ENCODE measurements at regions of chr10 and their contacts with region 1.

Region 1: GRCh38 chr10:31759799-31760626 is 168.6 kb downstream of the ARHGAP12 start:
- DNase-seq: peak; percentile 92
- H3K4me3 Mint-ChIP-seq: peak overlapping the region; percentile 83
- H3K27ac Mint-ChIP-seq: peak overlapping the region; percentile 89
- H3K4me1 Mint-ChIP-seq: peaks cover 28% of the 10 kb centered on the region
- H3K27me3 Mint-ChIP-seq: peaks cover 5% of the 10 kb centered on the region

Region 2: GRCh38 chr10:31603235-31604087 is 156.6 kb before region 1 on chr10:
- intact Hi-C with region 1: loop called (anchors 1 kb)
- DNase-seq: peak; percentile 82
- H3K4me3 Mint-ChIP-seq: peak overlapping the region; percentile 80
- H3K27ac Mint-ChIP-seq: no peak overlapping the region
- H3K4me1 Mint-ChIP-seq: peaks cover 29% of the 10 kb centered on the region
- H3K27me3 Mint-ChIP-seq: peaks cover 6% of the 10 kb centered on the region

Region 3: DNA sequence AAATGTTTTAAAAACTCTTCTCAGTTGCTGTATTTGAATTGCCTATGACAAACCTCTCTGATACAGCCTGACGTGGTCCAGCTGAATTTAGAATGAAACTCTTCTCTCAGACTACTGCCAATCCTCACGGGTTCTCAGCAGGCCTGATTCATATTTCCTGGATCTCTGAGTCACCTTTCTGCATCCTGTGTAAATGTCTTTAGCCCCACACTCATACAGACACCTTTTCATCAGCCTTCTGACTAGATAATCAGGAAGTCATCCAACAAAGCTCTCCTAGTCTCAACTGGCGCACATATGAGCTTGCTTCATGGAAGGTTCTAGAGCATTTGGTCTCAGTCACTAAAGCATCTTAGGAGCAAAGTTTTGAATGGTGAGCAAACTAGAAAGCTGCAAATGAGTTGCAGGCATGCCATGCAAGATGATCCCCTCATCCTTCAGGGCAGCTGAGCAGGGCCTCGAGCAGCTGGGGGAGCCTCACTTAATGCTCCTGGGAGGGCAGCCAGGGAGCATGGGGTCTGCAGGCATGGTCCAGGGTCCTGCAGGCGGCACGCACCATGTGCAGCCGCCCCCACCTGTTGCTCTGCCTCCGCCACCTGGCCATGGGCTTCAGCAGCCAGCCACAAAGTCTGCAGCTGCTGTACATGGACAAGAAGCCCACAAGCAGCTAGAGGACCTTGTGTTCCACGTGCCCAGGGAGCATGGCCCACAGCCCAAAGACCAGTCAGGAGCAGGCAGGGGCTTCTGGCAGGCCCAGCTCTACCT is 14.2 kb before region 1 on chr10:
- intact Hi-C with region 1: loop called (anchors 1 kb)
- DNase-seq: peak; percentile 49
- H3K4me3 Mint-ChIP-seq: peak overlapping the region; percentile 2
- H3K27ac Mint-ChIP-seq: peak overlapping the region; percentile 82
- H3K4me1 Mint-ChIP-seq: peaks cover 27% of the 10 kb centered on the region
- H3K27me3 Mint-ChIP-seq: no peaks in the 10 kb centered on the region

Region 4: GRCh38 chr10:31789557-31789956 is 29.5 kb after region 1 on chr10:
- intact Hi-C with region 1: loop called (anchors 1 kb)
- DNase-seq: no peak
- H3K4me3 Mint-ChIP-seq: no peak overlapping the region
- H3K27ac Mint-ChIP-seq: no peak overlapping the region
- H3K4me1 Mint-ChIP-seq: peaks cover 5% of the 10 kb centered on the region
- H3K27me3 Mint-ChIP-seq: peaks cover 7% of the 10 kb centered on the region

Region 5: DNA sequence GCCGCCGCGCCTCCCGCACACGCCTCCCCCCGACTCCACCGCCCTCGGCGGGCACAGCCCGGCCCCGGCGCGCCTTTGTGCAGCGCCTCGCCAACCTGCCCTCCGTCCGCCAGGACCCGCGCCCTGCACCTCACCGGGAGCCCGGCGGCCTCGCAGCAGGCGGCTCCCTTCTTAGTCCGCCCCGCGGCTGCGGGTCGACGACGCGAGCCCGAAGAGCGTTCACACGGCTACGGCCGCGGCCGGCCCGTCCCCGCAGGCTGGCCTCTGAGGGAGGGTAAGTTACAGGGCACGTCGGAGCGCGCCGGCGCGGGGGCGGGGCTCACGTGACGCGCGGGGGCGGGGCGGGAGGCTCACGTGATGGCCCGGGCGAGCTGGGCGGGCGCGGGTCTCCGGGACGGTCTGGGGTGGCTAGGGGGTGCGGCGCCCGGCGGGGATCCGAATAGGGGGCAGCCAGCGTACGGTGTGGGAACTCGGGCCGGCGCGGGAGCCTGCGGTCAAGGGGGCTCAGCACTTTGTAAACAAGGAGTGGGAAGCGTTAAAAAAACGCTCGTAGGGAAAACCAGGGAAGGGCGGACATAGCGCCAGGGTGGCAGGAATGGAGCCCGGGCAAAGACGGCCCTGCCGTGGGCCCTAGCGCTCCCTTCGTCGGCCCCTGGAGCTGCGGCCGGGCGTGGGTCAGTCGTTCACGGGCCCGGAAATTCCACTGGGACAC is 168.7 kb after region 1 on chr10 and contains the start of gene ARHGAP12:
- intact Hi-C with region 1: loop called (anchors 5 kb)
- DNase-seq: peak; percentile 68
- H3K4me3 Mint-ChIP-seq: peak within 1 kb of the TSS; percentile 88
- H3K27ac Mint-ChIP-seq: peak within 1 kb of the TSS; percentile 73
- H3K4me1 Mint-ChIP-seq: peaks cover 56% of the 10 kb centered on the region
- H3K27me3 Mint-ChIP-seq: peaks cover 13% of the 10 kb centered on the region
- total RNA-seq, gene ARHGAP12: 2.4 and 3.5 TPM in 2 replicates

Measured in activated T-helper 1 cell treated with anti-CD3 and anti-CD28 coated beads, Interleukin-12 subunit alpha, Interleukin-12 subunit beta, Interleukin-2, Interleukin-4 antibody, amounts not matched to agents 30 ng/mL and 10 ng/mL and 1 ng/mL, durations not matched to agents 14 hours and 24 hours and 36 hours (primary cell).